Tibial artery (tissue), 4 donors: ENCODE measurements at regions of chr5 and their contacts with region 1.

Region 1: GRCh38 chr5:67591491-67591890 is 394.9 kb upstream of the CD180 start:
- DNase-seq: no peak
- H3K4me3 ChIP-seq: no peak overlapping the region
- H3K27ac ChIP-seq: no peak overlapping the region
- H3K4me1 ChIP-seq: peaks cover 0 to 15% (median 4%) of the 10 kb centered on the region in 4 donors
- H3K27me3 ChIP-seq: no peaks in the 10 kb centered on the region
- CTCF ChIP-seq: no peak

Region 2: DNA sequence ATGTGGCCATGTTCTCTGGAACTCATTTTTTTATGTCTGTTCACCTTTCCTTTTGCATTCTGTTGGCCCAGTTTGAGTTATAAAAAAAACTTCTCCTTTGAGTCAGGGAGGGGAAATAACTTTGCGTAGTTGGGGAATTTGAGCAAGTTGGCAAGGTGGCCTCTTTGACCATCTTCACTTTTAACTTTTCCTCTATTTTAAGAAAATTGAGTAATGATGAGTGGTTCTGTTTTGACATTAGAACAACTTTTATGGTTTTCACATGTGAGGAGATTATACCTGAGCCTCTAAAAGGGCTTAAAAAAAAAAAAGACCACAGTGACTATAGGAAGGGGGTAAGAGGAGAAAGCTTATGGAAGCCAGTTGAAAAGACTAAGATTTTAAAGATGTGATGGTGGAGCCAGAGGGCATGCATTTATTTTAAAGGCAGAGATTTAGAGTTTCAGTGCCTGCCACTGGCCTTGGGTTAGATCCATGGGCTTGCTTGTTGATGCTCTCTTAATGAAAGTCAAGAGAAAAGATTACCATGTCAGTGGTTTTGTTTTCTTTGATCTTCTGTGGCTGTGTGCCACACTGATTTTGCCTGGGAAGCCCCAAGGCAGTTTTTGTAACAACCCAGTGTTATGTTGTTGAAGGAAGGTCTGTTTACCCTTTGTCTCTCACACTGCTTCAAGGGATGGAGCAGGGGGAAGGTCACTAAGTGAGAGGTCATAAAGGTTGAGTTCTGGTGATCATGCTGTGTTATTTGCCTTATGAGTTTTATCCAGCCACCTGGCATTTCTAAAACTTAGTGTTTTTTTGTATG is 175.2 kb before region 1 on chr5:
- intact Hi-C with region 1: no loop called
- DNase-seq: no peak
- H3K4me3 ChIP-seq: no peak overlapping the region
- H3K27ac ChIP-seq: no peak overlapping the region
- H3K4me1 ChIP-seq: peaks cover 0 to 4% (median 0%) of the 10 kb centered on the region in 4 donors
- H3K27me3 ChIP-seq: no peaks in the 10 kb centered on the region
- CTCF ChIP-seq: no peak

Region 3: DNA sequence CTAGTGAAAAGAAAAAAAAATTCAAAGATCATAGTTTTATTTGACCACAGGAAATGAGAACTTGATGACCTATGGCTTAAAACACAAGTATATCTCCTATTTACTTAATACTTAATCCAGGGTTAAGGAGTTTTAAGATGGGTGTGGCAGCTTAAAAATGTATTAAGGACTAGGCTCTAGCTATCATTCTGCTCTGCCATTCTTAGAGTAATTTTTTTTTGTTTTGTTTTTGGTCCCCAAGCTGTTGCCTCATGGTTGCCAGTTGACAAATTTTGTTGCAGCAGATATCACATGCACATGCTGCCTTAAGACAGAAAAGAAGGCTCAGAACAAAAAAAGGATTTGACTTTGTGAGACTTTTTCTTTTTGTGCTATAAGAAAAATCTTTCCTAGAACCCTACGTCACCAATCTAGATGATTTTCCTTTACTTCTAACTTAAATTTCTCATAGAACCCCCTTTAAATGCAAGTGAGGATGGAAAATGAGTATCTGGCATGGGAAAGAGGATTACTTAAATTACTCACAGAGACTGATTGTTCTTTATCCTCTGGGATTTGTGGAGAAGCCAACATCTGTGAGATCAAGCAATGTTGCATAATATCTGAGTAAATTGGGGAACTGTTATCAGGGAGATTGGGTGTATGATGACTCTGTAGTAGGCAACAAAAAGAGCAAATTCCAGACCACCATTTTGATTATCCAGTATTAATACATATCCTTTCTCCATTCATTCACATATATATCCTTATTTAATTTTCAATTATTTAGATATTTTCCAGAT is 30.1 kb before region 1 on chr5:
- intact Hi-C with region 1: loop called (anchors 2 kb)
- DNase-seq: no peak
- H3K4me3 ChIP-seq: no peak overlapping the region
- H3K27ac ChIP-seq: no peak overlapping the region
- H3K4me1 ChIP-seq: no peaks in the 10 kb centered on the region
- H3K27me3 ChIP-seq: no peaks in the 10 kb centered on the region
- CTCF ChIP-seq: no peak